ENCODE measurements at regions of chr17 and their contacts with region 1.

Region 1: DNA sequence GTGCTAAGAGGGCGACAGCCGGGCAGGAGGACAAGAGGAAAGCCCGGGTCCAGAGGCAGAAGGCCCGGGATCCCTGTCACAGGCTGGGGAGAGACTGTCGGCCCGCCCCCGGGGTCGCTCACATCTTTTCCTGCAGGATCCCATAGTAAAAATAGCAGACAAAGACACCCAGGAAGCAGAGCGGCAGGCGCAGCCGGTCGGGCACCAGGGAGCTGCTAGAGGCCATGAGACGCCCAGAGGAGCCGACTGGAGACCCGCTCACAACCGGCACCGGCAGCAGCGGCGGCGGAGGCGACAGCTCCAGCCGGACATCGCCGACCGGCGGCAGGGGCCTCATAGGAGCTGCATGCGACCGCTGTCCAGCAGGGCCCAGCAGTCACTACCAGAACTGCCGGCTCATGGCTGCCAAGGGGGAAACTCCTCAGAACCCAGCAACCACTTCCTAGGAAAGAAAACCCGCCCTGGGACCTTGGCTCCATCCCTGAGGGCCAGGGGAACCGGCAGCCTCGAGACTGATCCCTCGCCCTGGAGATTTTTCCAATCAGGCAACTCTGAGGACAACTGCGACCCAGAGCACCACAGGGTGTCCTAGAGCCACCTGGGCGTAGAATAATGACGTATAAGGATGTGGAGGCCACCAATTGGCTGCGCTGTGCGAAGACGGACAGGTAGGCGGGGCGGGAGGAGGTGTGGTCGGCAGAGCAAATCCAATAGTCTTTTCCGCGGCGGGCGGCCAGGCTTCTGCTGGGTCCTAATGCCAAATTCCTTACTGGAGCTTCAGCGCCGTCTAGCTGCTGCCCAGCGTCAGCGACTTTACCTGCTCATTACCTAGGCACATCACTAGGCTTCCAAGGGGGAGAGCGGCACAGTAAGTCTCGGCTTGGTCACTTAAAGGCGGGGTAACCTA is at the start of gene SLC35B1:
- DNase-seq: peak; percentile 99
- ATAC-seq: peak; percentile 98
- H3K4me3 ChIP-seq: peak within 1 kb of the TSS; percentile 61 to 94 (median 84)
- H3K4me3 Mint-ChIP-seq: peak within 1 kb of the TSS; percentile 88
- H3K27ac ChIP-seq: peak within 1 kb of the TSS; percentile 68 to 93
- H3K27ac Mint-ChIP-seq: peak within 1 kb of the TSS; percentile 93
- H3K4me1 ChIP-seq: peaks cover 19 to 25% of the 10 kb centered on the region in 2 donors
- H3K4me1 Mint-ChIP-seq: peaks cover 31% of the 10 kb centered on the region
- H3K27me3 ChIP-seq: no peaks in the 10 kb centered on the region
- H3K27me3 Mint-ChIP-seq: no peaks in the 10 kb centered on the region
- CTCF ChIP-seq: peak; percentile 81
- total RNA-seq, gene SLC35B1: 40.5 and 47.2 TPM in 2 replicates

Region 2: GRCh38 chr17:49414622-49415350 is 293.1 kb before region 1 on chr17 and contains the start of gene PHB1:
- CTCF ChIA-PET with region 1: no interaction called
- POLR2A ChIA-PET with region 1: no interaction called
- intact Hi-C with region 1: loop called (anchors 10 kb)
- DNase-seq: peak; percentile 96
- ATAC-seq: peak; percentile 98
- H3K4me3 ChIP-seq: peak within 1 kb of the TSS; percentile 51 to 93 (median 75)
- H3K4me3 Mint-ChIP-seq: peak within 1 kb of the TSS; percentile 94
- H3K27ac ChIP-seq: peak within 1 kb of the TSS in 1 of 2 donors; percentile 72
- H3K27ac Mint-ChIP-seq: peak within 1 kb of the TSS; percentile 84
- H3K4me1 ChIP-seq: peaks cover 7 to 17% of the 10 kb centered on the region in 2 donors
- H3K4me1 Mint-ChIP-seq: peaks cover 22% of the 10 kb centered on the region
- H3K27me3 ChIP-seq: no peaks in the 10 kb centered on the region
- H3K27me3 Mint-ChIP-seq: no peaks in the 10 kb centered on the region
- CTCF ChIP-seq: no peak
- total RNA-seq, gene PHB1: 72.3 and 73.6 TPM in 2 replicates

Region 3: DNA sequence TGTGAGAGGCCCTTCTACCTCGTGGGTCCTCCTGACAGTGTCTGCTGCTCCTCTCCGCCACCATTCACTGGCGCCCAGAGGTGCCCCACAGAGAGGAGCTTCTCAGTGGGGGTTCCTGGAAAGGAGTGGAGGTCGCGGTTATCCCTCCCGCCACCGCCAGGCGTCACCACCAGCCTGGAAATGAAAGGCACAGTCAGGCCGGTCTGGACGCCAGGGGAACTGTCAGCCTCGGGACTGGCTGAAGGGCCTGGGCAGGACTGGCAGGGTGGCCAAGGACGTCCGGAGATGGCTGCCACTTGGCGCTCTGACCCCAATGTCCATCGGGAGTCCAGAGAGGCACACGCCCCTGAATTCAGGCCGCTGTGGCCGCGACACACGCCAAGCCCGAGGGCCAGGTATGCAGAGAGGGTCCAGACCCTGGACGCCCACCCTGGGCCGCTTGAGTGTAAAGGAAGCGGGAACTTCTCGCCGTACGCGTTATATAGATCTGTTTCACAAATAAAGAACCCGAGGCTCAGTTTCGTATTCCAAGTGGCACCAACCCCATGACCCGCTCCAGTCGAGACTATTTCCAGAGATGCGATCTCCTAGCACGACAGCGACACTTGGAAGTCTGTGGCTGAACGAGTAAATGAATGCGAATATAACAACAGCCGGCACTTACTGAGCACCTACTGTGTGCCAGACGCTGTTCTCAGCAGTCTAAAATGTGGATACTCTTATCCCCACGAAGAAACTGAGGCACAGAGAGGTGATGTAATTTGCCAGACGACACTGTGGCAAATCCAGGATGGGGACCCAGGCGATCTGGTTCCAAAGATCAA is 139.8 kb before region 1 on chr17:
- CTCF ChIA-PET with region 1: interaction called, 485 read pairs
- POLR2A ChIA-PET with region 1: interaction called, 3 read pairs
- intact Hi-C with region 1: no loop called
- DNase-seq: peak; percentile 88
- ATAC-seq: peak; percentile 66
- H3K4me3 ChIP-seq: peak overlapping the region in 3 of 5 experiments; percentile 20 to 39 (median 23)
- H3K4me3 Mint-ChIP-seq: peak overlapping the region; percentile 79
- H3K27ac ChIP-seq: no peak overlapping the region
- H3K27ac Mint-ChIP-seq: peak overlapping the region; percentile 32
- H3K4me1 ChIP-seq: peaks cover 6 to 17% of the 10 kb centered on the region in 2 donors
- H3K4me1 Mint-ChIP-seq: peaks cover 19% of the 10 kb centered on the region
- H3K27me3 ChIP-seq: peaks cover 0 to 42% (median 9%) of the 10 kb centered on the region in 4 experiments
- H3K27me3 Mint-ChIP-seq: peaks cover 36% of the 10 kb centered on the region
- CTCF ChIP-seq: peak; percentile 93

Region 4: GRCh38 chr17:49739641-49740271 is 31.9 kb after region 1 on chr17:
- CTCF ChIA-PET with region 1: interaction called, 19 read pairs
- POLR2A ChIA-PET with region 1: interaction called, 6 read pairs
- intact Hi-C with region 1: loop called (anchors 1 kb)
- DNase-seq: peak; percentile 97
- ATAC-seq: peak; percentile 96
- H3K4me3 ChIP-seq: peak overlapping the region; percentile 4 to 57 (median 52)
- H3K4me3 Mint-ChIP-seq: peak overlapping the region; percentile 95
- H3K27ac ChIP-seq: peak overlapping the region; percentile 89 to 98
- H3K27ac Mint-ChIP-seq: peak overlapping the region; percentile 100
- H3K4me1 ChIP-seq: peaks cover 76 to 84% of the 10 kb centered on the region in 2 donors
- H3K4me1 Mint-ChIP-seq: peaks cover 85% of the 10 kb centered on the region
- H3K27me3 ChIP-seq: no peaks in the 10 kb centered on the region
- H3K27me3 Mint-ChIP-seq: no peaks in the 10 kb centered on the region
- CTCF ChIP-seq: no peak

Region 5: GRCh38 chr17:49763735-49764558 is 56.1 kb after region 1 on chr17 and contains the start of gene FAM117A:
- CTCF ChIA-PET with region 1: interaction called, 54 read pairs
- POLR2A ChIA-PET with region 1: interaction called, 21 read pairs
- intact Hi-C with region 1: loop called (anchors 1 kb)
- DNase-seq: peak; percentile 98
- ATAC-seq: peak; percentile 89
- H3K4me3 ChIP-seq: peak within 1 kb of the TSS; percentile 63 to 77 (median 76)
- H3K4me3 Mint-ChIP-seq: peak within 1 kb of the TSS; percentile 96
- H3K27ac ChIP-seq: peak within 1 kb of the TSS; percentile 39 to 63
- H3K27ac Mint-ChIP-seq: peak within 1 kb of the TSS; percentile 87
- H3K4me1 ChIP-seq: peaks cover 42 to 46% of the 10 kb centered on the region in 2 donors
- H3K4me1 Mint-ChIP-seq: peaks cover 52% of the 10 kb centered on the region
- H3K27me3 ChIP-seq: no peaks in the 10 kb centered on the region
- H3K27me3 Mint-ChIP-seq: no peaks in the 10 kb centered on the region
- CTCF ChIP-seq: no peak
- total RNA-seq, gene FAM117A: 93.3 and 93.4 TPM in 2 replicates

Region 6: DNA sequence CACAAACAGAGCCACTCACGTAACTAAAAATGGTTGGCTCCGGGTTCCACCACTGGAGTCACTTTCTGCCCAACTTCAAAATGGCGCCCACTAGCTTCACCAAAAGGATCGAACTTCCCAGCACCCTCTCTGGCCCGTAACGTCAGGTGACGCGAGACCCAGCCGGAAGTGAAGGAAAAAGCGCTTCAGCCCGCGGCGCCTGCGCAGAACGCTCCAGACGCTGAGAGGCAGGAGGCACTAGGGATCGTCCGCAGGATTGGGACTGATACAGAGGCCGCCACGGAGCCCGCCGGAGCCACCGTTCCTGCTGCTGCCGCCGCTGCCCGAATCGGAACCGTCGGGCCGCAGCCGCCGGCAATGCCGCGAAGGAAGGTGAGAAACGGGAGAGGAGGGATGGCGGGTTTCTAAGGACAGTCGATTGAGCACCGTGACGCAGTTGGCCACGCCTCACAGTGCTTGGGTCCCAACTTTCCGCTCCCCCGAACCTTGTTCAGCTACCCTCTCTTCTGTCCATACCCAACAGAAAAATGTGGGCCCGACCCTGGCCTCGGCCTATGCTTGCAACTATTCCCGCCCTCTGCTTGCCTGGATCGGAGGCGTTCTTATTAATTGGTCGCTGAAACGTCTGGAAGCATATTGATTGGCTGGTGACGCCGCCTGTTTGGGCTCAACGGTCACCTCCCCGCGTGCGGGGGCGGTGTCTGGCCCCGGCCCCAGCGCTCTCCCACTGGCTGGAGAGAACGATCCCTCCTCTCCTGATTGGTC is 80.8 kb after region 1 on chr17 and contains the start of gene KAT7:
- CTCF ChIA-PET with region 1: interaction called, 43 read pairs
- POLR2A ChIA-PET with region 1: interaction called, 23 read pairs
- intact Hi-C with region 1: loop called (anchors 1 kb)
- DNase-seq: peak; percentile 99
- ATAC-seq: peak; percentile 83
- H3K4me3 ChIP-seq: peak within 1 kb of the TSS; percentile 68 to 100 (median 96)
- H3K4me3 Mint-ChIP-seq: peak within 1 kb of the TSS; percentile 98
- H3K27ac ChIP-seq: peak within 1 kb of the TSS; percentile 89 to 98
- H3K27ac Mint-ChIP-seq: peak within 1 kb of the TSS; percentile 99
- H3K4me1 ChIP-seq: peaks cover 18 to 20% of the 10 kb centered on the region in 2 donors
- H3K4me1 Mint-ChIP-seq: peaks cover 50% of the 10 kb centered on the region
- H3K27me3 ChIP-seq: no peaks in the 10 kb centered on the region
- H3K27me3 Mint-ChIP-seq: no peaks in the 10 kb centered on the region
- CTCF ChIP-seq: no peak
- total RNA-seq, gene KAT7: 124 and 127 TPM in 2 replicates

Region 7: DNA sequence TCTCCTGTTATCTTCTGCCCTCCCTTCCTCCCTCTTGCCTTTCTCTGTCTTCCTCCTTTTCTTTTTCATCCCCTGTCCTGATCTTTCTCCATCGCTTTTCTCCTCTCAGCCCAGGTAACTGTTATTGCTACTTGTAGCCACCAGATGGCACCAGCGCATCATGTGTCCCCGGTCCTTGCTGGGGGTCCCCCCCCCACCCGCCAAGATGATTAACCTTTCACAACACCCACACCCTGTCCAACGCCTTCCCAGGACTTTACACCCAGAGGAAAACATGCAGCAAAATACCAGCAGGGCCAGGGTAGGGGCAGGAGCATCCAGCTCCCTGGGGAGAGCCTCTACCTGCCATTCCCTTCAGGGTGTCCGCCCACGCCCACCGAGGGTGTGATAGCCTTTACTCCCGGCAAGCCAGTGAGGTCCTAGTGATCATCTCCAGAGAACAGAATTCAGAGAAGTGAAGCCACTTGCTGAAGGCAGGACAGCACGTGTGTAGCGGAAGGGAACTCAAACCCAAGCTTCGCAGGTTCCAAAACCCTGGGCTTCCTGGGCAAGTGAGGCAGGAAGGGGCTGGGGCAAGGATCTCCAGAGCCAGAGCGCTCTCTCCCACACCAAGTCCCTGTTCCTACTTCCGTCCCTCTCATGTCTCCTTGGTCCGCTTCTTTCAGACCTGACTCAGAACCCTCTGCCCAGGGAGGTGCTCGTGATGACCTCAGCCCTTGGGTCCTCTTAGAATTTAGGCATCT is 153.5 kb after region 1 on chr17:
- CTCF ChIA-PET with region 1: no interaction called
- POLR2A ChIA-PET with region 1: no interaction called
- intact Hi-C with region 1: no loop called
- DNase-seq: peak; percentile 78
- ATAC-seq: peak; percentile 76
- H3K4me3 ChIP-seq: no peak overlapping the region
- H3K4me3 Mint-ChIP-seq: no peak overlapping the region
- H3K27ac ChIP-seq: no peak overlapping the region
- H3K27ac Mint-ChIP-seq: no peak overlapping the region
- H3K4me1 ChIP-seq: no peaks in the 10 kb centered on the region
- H3K4me1 Mint-ChIP-seq: peaks cover 3% of the 10 kb centered on the region
- H3K27me3 ChIP-seq: peaks cover 0 to 31% (median 3%) of the 10 kb centered on the region in 4 experiments
- H3K27me3 Mint-ChIP-seq: peaks cover 34% of the 10 kb centered on the region
- CTCF ChIP-seq: peak; percentile 93

Region 8: DNA sequence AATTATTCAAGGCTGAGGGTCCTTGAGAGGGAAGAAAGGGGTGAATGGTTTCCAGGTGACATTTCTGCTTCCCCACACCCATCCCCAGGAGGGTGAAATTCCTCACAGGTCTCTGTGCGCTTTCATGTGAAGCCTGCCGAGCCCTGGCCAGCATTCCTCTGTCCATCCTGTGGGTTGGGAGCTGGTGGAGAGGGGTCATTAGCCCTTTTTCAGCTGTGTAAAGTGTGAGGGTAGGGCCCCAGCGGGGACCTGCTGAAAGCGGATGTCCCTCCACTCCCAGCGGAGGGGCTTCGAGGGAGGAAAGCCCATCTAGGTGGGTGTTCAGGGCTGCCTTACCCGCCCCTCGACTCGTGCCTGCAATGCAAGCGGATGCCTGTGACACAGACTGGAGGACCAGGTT is 207.8 kb after region 1 on chr17:
- CTCF ChIA-PET with region 1: no interaction called
- POLR2A ChIA-PET with region 1: no interaction called
- intact Hi-C with region 1: no loop called
- DNase-seq: no peak
- ATAC-seq: no peak
- H3K4me3 ChIP-seq: no peak overlapping the region
- H3K4me3 Mint-ChIP-seq: no peak overlapping the region
- H3K27ac ChIP-seq: no peak overlapping the region
- H3K27ac Mint-ChIP-seq: no peak overlapping the region
- H3K4me1 ChIP-seq: no peaks in the 10 kb centered on the region
- H3K4me1 Mint-ChIP-seq: no peaks in the 10 kb centered on the region
- H3K27me3 ChIP-seq: peaks cover 0 to 33% (median 5%) of the 10 kb centered on the region in 4 experiments
- H3K27me3 Mint-ChIP-seq: peaks cover 54% of the 10 kb centered on the region
- CTCF ChIP-seq: no peak

Measured in B cell (primary cell).